Colonic mucosa (tissue), 4 donors: ENCODE measurements at regions of chr1 and their contacts with region 1.

Region 1: DNA sequence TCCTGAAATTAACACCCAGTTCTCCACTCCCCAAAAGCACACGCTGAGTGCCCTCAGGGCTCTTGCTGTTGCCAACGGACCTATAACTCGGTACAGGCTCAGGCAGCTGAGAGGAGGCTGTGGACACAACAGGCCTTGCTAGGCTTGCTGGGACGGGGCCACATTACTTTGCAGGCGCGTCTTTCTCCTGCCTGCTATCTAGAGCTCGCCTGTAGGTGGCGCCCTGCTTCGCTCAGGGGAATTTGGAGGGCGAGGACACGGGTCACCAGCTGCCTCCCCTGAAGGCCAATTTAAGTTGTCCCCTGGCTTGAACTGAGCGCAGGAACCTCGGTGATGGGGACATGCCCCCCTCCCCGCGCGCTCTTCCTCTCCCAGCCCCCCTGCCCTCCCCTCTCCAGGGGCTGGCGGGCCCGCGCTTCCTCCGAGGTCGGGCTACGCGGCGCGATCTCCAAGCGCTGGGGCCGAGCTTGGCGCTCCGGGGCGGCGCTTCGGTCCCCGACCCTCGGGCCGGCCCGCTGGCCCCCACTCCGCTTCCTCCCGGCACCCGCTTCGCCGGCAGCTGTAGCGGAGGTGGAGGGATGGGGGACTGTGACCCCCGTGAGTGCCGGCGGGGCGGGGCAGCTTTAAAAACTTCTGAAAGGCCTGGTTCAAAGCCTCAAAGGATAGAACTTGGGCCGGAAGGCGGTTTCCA is 32.4 kb upstream of the NFIA start:
- DNase-seq: peak; percentile 98
- H3K4me3 ChIP-seq: peak overlapping the region; percentile 76
- H3K27ac ChIP-seq: peak overlapping the region; percentile 71
- H3K4me1 ChIP-seq: peaks cover 2% of the 10 kb centered on the region
- H3K27me3 ChIP-seq: no peaks in the 10 kb centered on the region
- CTCF ChIP-seq: peak; percentile 90

Region 2: DNA sequence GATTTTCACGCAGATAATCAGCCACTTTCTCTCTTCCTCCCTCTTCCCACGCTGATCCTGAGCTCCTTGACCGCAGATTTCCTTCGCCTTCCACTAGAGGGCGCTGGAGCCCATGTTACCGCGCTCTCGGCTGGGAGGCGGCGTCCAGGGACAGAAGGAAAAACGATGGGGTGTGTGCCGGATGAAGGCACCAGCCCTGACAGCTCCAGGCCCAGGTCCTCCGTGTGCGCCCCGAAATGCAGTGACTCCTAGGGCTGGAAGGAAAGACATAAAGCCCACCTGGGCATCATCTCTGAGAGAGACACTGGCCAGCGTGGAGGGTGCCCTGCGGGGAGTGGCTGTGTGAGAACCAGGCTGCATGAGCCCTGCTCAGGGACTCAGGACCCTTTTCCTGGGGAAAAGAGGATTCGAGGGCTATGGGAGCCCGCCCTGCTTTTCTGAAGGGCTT is 1078.5 kb before region 1 on chr1:
- intact Hi-C with region 1: loop called (anchors 10 kb)
- DNase-seq: peak; percentile 82
- H3K4me3 ChIP-seq: no peak overlapping the region
- H3K27ac ChIP-seq: no peak overlapping the region
- H3K4me1 ChIP-seq: no peaks in the 10 kb centered on the region
- H3K27me3 ChIP-seq: no peaks in the 10 kb centered on the region
- CTCF ChIP-seq: peak; percentile 84

Region 3: DNA sequence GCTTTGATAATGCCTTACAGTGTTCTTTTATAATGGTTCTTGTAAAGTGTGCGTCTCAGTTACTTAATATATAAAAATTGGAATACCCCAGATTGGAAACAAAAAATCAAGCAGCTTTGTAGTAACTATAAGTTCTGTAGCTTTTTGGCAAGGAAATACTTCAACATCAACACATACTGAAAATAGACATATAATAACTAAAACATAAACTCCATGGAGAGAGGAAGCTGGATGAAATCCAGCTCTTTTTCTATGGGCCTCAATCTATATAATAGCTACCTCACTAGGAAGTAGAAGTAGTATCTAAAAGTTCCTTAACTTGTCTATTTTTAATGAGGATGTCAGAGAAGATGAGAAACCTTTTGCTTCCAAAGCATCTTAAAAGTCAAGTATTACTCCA is 280.9 kb before region 1 on chr1:
- intact Hi-C with region 1: no loop called
- DNase-seq: no peak
- H3K4me3 ChIP-seq: no peak overlapping the region
- H3K27ac ChIP-seq: no peak overlapping the region
- H3K4me1 ChIP-seq: no peaks in the 10 kb centered on the region
- H3K27me3 ChIP-seq: no peaks in the 10 kb centered on the region
- CTCF ChIP-seq: no peak

Region 4: DNA sequence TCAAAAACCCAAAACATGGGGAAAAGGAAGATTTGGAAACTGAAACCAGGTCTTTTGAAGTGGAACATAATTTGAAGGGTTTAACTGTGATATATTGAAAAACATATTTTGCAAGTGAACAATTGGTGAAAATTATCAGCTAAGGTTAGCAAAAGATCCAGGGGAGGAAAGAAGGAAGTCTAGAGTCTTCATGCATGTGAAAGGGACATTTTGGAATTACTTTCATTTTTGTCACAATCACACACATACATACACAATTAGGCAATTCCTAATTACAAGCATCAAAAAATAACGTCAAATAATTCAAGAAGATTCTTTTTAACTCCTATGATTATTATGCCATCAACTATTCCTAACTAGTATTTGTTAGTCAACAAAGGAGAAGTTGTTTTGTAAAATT is 32.3 kb before region 1 on chr1:
- intact Hi-C with region 1: no loop called
- DNase-seq: no peak
- H3K4me3 ChIP-seq: no peak overlapping the region
- H3K27ac ChIP-seq: no peak overlapping the region
- H3K4me1 ChIP-seq: no peaks in the 10 kb centered on the region
- H3K27me3 ChIP-seq: no peaks in the 10 kb centered on the region
- CTCF ChIP-seq: no peak

Region 5: GRCh38 chr1:61102041-61102440 is 52.0 kb after region 1 on chr1:
- intact Hi-C with region 1: no loop called
- DNase-seq: no peak
- H3K4me3 ChIP-seq: no peak overlapping the region
- H3K27ac ChIP-seq: peak overlapping the region; percentile 3
- H3K4me1 ChIP-seq: no peaks in the 10 kb centered on the region
- H3K27me3 ChIP-seq: no peaks in the 10 kb centered on the region
- CTCF ChIP-seq: no peak

Region 6: GRCh38 chr1:61170328-61171238 is 120.6 kb after region 1 on chr1:
- intact Hi-C with region 1: no loop called
- DNase-seq: no peak
- H3K4me3 ChIP-seq: no peak overlapping the region
- H3K27ac ChIP-seq: peak overlapping the region; percentile 5
- H3K4me1 ChIP-seq: no peaks in the 10 kb centered on the region
- H3K27me3 ChIP-seq: no peaks in the 10 kb centered on the region
- CTCF ChIP-seq: no peak

Region 7: DNA sequence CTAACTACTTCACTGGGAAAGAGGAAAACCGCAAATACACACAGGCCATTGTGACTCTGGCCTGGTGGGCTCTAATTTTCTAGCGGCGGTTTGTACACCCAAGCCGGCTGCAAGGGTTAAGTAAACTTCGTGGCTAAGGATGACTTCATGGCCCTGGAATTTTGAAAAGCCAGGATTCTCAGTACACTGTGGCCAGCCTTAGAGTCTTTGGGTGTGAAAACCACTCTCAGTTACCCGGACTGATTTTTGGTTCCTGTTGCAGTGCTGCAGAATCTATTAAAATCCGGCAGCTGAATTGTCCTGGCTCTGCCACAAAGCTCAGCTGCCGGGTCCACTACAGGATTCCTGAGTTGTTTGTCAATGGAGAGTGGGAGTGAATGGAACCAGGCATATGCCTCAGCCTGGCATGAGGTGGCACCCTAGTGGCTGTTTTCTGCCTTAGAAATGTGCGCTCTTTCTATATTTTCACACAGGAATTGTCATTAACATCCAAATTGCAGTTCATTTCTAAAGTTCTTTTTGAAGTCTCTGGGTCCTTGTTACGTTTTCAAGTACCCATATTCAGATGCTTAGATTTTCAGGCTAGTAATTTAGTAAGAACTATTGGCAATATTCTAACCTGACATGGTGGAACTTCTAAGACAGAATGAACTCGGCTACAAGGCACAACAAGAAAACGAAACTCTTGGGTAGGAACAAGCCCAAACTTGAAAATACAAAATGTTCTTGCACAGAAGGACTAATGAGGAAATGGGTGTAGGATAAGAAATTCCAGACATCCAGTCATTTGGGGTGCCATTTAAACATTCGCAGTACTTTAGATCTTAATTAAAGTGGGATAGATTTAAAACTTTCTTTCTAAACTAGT is 288.2 kb after region 1 on chr1:
- intact Hi-C with region 1: loop called (anchors 2 kb)
- DNase-seq: peak; percentile 64
- H3K4me3 ChIP-seq: no peak overlapping the region
- H3K27ac ChIP-seq: peak overlapping the region; percentile 29
- H3K4me1 ChIP-seq: no peaks in the 10 kb centered on the region
- H3K27me3 ChIP-seq: no peaks in the 10 kb centered on the region
- CTCF ChIP-seq: peak; percentile 44

Region 8: GRCh38 chr1:61453111-61453961 is 403.3 kb after region 1 on chr1:
- intact Hi-C with region 1: loop called (anchors 5 kb)
- DNase-seq: peak; percentile 90
- H3K4me3 ChIP-seq: no peak overlapping the region
- H3K27ac ChIP-seq: peak overlapping the region; percentile 4
- H3K4me1 ChIP-seq: peaks cover 13% of the 10 kb centered on the region
- H3K27me3 ChIP-seq: no peaks in the 10 kb centered on the region
- CTCF ChIP-seq: peak; percentile 75

Region 9: DNA sequence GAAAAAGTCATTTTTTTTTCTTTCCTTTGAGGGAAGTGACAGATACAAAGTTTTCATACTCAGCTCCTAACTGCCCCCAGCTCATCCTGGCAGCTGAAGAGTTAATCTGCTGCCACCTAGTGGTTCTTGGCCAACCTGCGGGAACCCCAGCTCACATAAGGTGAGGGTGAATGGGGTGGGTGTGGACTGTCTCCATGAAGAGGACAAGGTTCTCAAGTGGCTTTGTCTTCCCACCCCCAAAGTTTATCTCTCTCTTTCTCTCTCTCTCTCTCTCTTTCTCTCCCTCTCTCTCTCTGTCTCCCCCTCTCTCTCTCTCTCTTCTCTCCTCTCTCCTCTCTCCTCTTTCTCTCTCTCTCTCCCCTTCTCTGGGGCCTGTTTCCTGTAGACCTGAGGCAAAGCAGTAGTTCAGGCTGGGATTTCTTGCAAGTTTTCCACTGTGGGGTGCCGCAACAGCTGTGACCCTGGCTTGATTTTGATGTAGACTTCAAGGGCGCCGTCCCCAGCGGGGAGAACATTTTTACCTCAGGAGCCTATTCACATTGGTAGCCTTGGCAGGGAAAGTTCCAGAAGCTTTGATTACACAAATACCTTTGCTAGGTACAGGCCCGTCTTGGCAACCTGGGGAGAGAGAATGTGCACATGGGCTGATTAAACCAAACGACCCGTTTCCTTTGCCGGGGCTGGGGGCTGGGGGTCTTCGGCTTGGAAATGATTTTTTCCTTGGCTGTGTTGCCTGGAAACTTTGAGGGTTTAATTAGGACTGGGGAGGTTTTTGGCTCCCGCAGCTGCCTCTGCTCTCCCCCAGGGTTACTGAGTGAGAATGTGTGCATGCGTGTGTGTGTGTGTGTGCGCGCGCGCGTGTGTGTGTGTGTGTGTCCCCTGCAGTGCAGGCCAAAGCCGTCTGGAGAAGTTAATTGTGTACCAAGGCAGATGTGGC is 539.0 kb after region 1 on chr1:
- intact Hi-C with region 1: loop called (anchors 10 kb)
- DNase-seq: peak; percentile 77
- H3K4me3 ChIP-seq: no peak overlapping the region
- H3K27ac ChIP-seq: no peak overlapping the region
- H3K4me1 ChIP-seq: no peaks in the 10 kb centered on the region
- H3K27me3 ChIP-seq: no peaks in the 10 kb centered on the region
- CTCF ChIP-seq: peak; percentile 71

Region 10: GRCh38 chr1:61641578-61642336 is 591.8 kb after region 1 on chr1:
- intact Hi-C with region 1: loop called (anchors 10 kb)
- DNase-seq: peak; percentile 68
- H3K4me3 ChIP-seq: peak overlapping the region; percentile 5
- H3K27ac ChIP-seq: peak overlapping the region; percentile 25
- H3K4me1 ChIP-seq: no peaks in the 10 kb centered on the region
- H3K27me3 ChIP-seq: no peaks in the 10 kb centered on the region
- CTCF ChIP-seq: peak; percentile 63